ENCODE measurements at regions of chr5 and their contacts with region 1.

Region 1: GRCh38 chr5:178590141-178590923 is at the start of gene COL23A1:
- DNase-seq: peak; percentile 78 to 86
- ATAC-seq: peak; percentile 67
- H3K4me3 ChIP-seq: peak within 1 kb of the TSS; percentile 6 to 43
- H3K27ac ChIP-seq: peak within 1 kb of the TSS in 1 of 2 donors; percentile 22
- H3K4me1 ChIP-seq: no peaks in the 10 kb centered on the region
- H3K27me3 ChIP-seq: no peaks in the 10 kb centered on the region
- total RNA-seq, gene COL23A1: 0.36 to 1.5 TPM

Region 2: GRCh38 chr5:178461004-178461730 is 129.2 kb before region 1 on chr5:
- intact Hi-C with region 1: loop called in 1 of 2 experiments (anchors 10 kb)
- DNase-seq: peak; percentile 90 to 91
- ATAC-seq: peak; percentile 91
- H3K4me3 ChIP-seq: no peak overlapping the region
- H3K27ac ChIP-seq: no peak overlapping the region
- H3K4me1 ChIP-seq: no peaks in the 10 kb centered on the region
- H3K27me3 ChIP-seq: no peaks in the 10 kb centered on the region

Region 3: DNA sequence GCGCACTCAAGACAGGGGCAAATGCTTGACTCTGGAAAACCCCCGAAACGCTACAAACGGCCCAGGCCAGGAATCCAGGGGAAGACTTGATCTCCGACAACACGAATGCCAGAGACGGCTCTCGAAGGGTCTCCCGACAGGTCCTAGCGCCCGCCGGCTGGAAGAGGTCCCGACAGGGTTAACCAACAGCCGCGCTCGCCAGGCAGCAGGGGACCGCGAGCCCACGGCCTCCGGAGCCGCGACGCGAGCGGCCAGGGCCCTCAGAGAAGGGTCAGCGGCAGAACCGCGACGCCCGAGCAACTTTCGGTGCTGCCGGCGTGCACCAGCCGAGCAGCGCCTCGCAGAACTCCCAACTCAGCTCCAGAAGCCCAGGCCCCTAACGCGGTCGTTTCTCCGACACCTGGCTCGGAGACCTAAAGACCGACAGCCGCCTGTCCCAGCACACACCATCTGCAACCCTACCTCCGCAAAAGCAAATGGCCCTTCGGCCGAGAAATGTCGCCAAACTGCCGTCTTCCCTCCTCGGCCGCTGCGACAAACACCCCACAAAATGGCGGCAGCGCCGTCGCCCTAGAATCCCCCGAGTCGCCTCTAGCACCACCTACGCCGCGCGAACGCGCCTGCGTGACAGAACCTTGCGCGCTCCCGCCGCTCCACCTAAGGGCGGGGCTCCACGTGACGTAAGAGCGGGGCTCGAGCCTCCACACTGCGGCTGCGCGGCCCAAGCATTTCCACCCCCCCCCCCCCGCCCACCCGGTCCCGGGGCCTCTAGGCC is 36.3 kb after region 1 on chr5 and contains the start of gene CLK4:
- intact Hi-C with region 1: loop called in 1 of 2 experiments (anchors 5 kb)
- DNase-seq: peak; percentile 98 to 99
- ATAC-seq: peak; percentile 99
- H3K4me3 ChIP-seq: peak within 1 kb of the TSS; percentile 69 to 97
- H3K27ac ChIP-seq: peak within 1 kb of the TSS; percentile 79 to 98
- H3K4me1 ChIP-seq: peaks cover 0 to 7% of the 10 kb centered on the region in 2 donors
- H3K27me3 ChIP-seq: no peaks in the 10 kb centered on the region
- total RNA-seq, gene CLK4: 26.3 to 39.5 TPM

Region 4: GRCh38 chr5:178699681-178700253 is 109.4 kb after region 1 on chr5:
- intact Hi-C with region 1: no loop called
- DNase-seq: no peak
- ATAC-seq: no peak
- H3K4me3 ChIP-seq: no peak overlapping the region
- H3K27ac ChIP-seq: no peak overlapping the region
- H3K4me1 ChIP-seq: no peaks in the 10 kb centered on the region
- H3K27me3 ChIP-seq: no peaks in the 10 kb centered on the region

Measured in aorta (tissue), 5 donors.